ENCODE measurements at regions of chr9 and their contacts with region 1.

Region 1: DNA sequence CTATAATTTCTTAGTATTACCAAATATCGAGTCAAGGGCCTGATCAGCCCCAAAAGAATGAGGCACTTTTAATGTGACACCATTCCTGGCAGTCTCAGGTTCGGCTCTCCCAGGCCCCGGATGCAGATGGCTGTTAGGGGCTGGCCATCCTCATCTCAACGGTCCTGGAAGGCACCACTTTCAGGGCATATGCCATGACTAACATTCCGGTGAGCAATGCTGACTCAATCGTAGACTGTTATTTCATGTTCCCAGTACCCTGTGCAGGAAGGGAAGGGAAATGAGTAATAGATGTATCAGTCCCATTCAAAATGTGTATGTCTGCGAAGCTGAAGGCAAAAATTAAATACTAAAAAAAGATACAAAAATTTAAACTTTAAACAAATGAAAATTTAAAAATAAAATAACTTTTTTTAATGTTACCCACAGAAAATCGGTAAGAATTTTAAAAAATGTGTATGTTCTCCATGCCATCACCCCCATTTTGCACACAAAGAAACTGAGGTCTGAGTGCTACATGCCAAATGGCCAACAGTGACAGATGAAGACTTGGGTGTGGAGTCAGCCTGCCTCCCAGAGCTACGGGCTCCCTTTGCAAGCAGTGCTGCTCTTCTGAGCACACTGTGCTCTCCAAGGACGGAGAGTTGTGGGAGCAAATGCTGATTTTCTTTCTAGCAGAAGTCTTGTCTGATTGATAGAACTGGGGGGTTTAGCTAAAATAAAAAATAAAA is 79.0 kb downstream of the GLDC start:
- DNase-seq: peak; percentile 74
- ATAC-seq: peak; percentile 84
- H3K4me3 Mint-ChIP-seq: peak overlapping the region; percentile 44
- H3K27ac Mint-ChIP-seq: peak overlapping the region; percentile 87
- H3K4me1 Mint-ChIP-seq: peaks cover 21% of the 10 kb centered on the region
- H3K27me3 Mint-ChIP-seq: peaks cover 5% of the 10 kb centered on the region

Region 2: DNA sequence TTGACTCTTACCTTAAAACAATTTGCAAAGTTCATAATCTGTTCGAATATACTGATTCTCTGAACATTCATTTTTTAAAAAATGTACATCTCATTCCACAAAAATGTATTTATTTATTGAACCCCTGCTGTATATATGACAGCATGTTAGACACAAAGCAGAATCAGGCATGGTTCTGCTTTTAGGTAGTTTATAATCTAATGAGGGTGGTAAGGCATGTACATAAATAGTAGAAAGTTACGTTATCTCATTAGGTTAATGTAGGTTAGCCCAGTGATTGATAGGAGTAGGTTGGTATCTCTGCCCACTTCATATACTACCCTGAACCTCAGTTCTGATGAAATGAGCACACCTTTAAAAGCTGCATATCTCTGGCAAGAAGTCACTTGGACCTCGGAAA is 823.5 kb before region 1 on chr9:
- CTCF ChIA-PET with region 1: no interaction called
- POLR2A ChIA-PET with region 1: no interaction called
- intact Hi-C with region 1: no loop called
- DNase-seq: no peak
- ATAC-seq: no peak
- H3K4me3 Mint-ChIP-seq: no peak overlapping the region
- H3K27ac Mint-ChIP-seq: no peak overlapping the region
- H3K4me1 Mint-ChIP-seq: peaks cover 1% of the 10 kb centered on the region
- H3K27me3 Mint-ChIP-seq: no peaks in the 10 kb centered on the region

Region 3: DNA sequence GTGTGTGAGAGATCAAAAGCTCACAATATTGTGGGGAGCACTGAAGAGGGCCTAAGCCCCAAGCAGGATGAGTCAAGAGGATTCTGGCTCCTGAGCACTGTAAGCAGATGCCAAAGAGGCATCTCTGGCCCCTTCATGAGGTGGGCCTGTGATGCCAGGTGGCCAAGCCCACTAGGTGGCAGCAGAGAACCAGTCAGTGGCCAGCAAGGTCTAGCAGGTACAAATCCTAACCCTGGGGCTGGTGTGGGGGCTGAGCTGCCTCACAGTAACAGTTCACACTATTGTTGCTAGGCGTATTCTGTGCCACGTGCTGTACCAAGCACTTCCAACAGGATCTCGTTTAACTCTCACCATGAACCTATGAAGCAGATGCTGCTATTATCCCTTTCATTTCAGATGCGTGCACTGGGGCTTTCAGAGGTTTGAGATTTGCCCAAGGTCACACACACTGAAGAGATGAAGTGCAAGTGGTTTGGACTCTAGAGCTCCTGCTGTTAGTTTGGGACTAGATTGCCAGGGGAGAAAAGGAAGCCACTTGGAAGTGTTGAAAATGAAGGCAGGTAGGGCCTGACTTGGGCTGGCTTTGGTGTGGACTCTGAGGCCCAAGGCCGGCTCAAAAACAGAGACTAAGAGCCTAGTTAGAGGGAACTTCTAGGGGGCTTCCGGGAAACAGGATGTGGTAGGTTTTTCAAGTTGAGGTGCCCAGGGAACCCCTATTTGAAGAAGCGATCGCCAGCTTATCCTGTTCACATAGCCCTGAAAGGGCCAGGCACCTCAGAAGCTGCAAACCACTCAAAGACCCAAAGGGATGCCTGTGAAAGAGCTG is 680.2 kb before region 1 on chr9:
- CTCF ChIA-PET with region 1: no interaction called
- POLR2A ChIA-PET with region 1: no interaction called
- intact Hi-C with region 1: loop called in 1 of 2 experiments (anchors 2 kb)
- DNase-seq: peak; percentile 92
- ATAC-seq: peak; percentile 100
- H3K4me3 Mint-ChIP-seq: no peak overlapping the region
- H3K27ac Mint-ChIP-seq: no peak overlapping the region
- H3K4me1 Mint-ChIP-seq: peaks cover 5% of the 10 kb centered on the region
- H3K27me3 Mint-ChIP-seq: no peaks in the 10 kb centered on the region

Region 4: GRCh38 chr9:6272229-6272598 is 294.4 kb before region 1 on chr9:
- CTCF ChIA-PET with region 1: no interaction called
- POLR2A ChIA-PET with region 1: no interaction called
- intact Hi-C with region 1: no loop called
- DNase-seq: no peak
- ATAC-seq: no peak
- H3K4me3 Mint-ChIP-seq: no peak overlapping the region
- H3K27ac Mint-ChIP-seq: no peak overlapping the region
- H3K4me1 Mint-ChIP-seq: no peaks in the 10 kb centered on the region
- H3K27me3 Mint-ChIP-seq: peaks cover 3% of the 10 kb centered on the region

Region 5: GRCh38 chr9:6353851-6354686 is 212.5 kb before region 1 on chr9:
- CTCF ChIA-PET with region 1: interaction called, 24 read pairs
- POLR2A ChIA-PET with region 1: interaction called, 3 read pairs
- intact Hi-C with region 1: loop called (anchors 1 kb)
- DNase-seq: peak; percentile 27
- ATAC-seq: peak; percentile 89
- H3K4me3 Mint-ChIP-seq: no peak overlapping the region
- H3K27ac Mint-ChIP-seq: peak overlapping the region; percentile 37
- H3K4me1 Mint-ChIP-seq: peaks cover 18% of the 10 kb centered on the region
- H3K27me3 Mint-ChIP-seq: peaks cover 4% of the 10 kb centered on the region

Region 6: DNA sequence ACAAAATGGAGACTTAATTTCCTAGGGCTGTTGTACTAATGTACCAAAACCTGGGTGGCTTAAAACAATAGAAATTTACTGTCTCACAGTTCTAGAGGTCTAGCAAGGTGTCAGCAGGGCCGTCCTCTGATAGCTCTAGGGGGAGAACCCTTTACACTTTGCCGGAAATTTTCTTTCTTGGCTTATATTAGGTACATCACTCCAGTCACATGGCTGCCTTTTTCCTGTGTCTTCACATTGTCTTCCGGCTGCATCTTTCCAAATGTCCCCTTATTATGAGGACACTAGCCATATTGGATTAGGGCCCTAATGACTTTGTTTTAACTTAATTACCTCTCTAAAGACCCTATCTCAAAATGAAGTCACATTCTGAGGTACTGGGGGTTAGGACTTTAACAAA is 147.8 kb before region 1 on chr9:
- CTCF ChIA-PET with region 1: interaction called, 8 read pairs
- POLR2A ChIA-PET with region 1: no interaction called
- intact Hi-C with region 1: loop called (anchors 1 to 2 kb)
- DNase-seq: no peak
- ATAC-seq: peak; percentile 22
- H3K4me3 Mint-ChIP-seq: peak overlapping the region; percentile 49
- H3K27ac Mint-ChIP-seq: peak overlapping the region; percentile 92
- H3K4me1 Mint-ChIP-seq: peaks cover 65% of the 10 kb centered on the region
- H3K27me3 Mint-ChIP-seq: no peaks in the 10 kb centered on the region

Region 7: GRCh38 chr9:6598249-6598725 is 31.7 kb after region 1 on chr9:
- CTCF ChIA-PET with region 1: interaction called, 3 read pairs
- POLR2A ChIA-PET with region 1: no interaction called
- intact Hi-C with region 1: loop called (anchors 1 kb)
- DNase-seq: peak; percentile 66
- ATAC-seq: peak; percentile 95
- H3K4me3 Mint-ChIP-seq: no peak overlapping the region
- H3K27ac Mint-ChIP-seq: peak overlapping the region; percentile 80
- H3K4me1 Mint-ChIP-seq: peaks cover 10% of the 10 kb centered on the region
- H3K27me3 Mint-ChIP-seq: peaks cover 2% of the 10 kb centered on the region

Measured in activated CD4-positive, alpha-beta T cell treated with anti-CD3 and anti-CD28 coated beads for 36 hours (primary cell).